ENCODE measurements at regions of chr3 and their contacts with region 1.

Region 1: DNA sequence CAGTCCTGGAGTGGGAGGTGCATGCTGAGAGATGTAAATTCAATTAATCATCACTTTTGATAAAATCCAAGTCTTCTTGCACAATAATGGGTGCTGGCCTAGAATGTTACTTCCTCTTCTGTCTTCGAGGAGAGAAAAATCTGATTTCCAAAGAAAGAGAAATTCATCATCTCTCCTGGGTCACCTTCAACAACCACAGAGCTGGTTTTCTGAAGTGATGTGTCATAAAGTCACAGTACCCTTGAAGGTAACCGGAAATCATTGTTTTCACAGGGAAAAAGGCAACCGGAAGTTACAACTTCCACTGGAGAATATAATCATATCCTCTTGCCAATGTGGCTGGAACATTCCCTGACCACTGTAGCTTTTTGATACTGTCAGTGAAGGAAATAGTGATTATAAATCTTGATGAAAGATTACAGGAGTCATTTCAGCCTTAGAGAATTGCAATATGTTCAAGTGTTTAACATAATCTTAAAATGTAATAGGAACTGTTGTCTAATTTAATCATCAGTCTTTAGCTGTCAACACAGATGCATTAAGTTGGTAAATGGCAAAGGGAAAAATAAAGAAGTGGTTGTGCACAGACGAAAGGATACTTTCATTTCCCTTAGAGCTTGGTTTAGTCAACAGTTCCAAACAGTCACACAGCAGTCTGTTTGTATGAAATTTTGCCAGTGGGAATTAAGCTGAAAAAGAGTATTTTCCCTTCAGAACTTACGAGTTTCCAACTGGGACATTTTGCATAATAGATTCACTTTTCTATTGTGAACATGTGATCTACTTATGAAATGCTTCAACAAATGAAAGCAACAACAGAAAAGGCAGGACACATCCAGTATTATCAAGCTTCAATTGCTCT is 106.5 kb upstream of the SLC4A7 start:
- DNase-seq: peak; percentile 9
- H3K4me3 Mint-ChIP-seq: no peak overlapping the region
- H3K27ac Mint-ChIP-seq: peak overlapping the region; percentile 5
- H3K4me1 Mint-ChIP-seq: peaks cover 24% of the 10 kb centered on the region
- H3K27me3 Mint-ChIP-seq: no peaks in the 10 kb centered on the region

Region 2: DNA sequence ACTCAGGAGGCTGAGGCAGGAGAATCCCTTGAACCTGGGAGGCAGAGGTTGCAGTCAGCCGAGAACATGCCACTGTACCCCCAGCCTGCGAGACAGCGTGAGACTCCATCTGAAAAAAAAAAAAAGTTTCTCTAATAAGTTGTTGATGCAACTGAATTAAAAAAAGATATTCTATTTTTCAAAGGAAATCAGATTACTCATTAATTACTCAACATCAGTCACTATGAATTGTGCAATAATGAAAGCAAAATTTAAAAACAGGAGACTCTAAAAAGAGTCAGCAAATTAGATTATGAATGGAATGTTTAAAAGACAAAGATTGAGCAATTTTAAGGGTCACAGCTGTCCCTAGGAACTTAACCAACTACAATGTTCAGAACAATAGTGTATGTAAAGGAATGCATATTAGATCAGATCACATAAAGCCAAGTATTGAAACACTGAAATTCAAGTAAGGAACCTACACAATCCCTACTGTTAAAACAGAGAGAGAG is 46.2 kb before region 1 on chr3:
- CTCF ChIA-PET with region 1: no interaction called
- intact Hi-C with region 1: no loop called
- DNase-seq: no peak
- H3K4me3 Mint-ChIP-seq: no peak overlapping the region
- H3K27ac Mint-ChIP-seq: no peak overlapping the region
- H3K4me1 Mint-ChIP-seq: peaks cover 3% of the 10 kb centered on the region
- H3K27me3 Mint-ChIP-seq: no peaks in the 10 kb centered on the region

Region 3: DNA sequence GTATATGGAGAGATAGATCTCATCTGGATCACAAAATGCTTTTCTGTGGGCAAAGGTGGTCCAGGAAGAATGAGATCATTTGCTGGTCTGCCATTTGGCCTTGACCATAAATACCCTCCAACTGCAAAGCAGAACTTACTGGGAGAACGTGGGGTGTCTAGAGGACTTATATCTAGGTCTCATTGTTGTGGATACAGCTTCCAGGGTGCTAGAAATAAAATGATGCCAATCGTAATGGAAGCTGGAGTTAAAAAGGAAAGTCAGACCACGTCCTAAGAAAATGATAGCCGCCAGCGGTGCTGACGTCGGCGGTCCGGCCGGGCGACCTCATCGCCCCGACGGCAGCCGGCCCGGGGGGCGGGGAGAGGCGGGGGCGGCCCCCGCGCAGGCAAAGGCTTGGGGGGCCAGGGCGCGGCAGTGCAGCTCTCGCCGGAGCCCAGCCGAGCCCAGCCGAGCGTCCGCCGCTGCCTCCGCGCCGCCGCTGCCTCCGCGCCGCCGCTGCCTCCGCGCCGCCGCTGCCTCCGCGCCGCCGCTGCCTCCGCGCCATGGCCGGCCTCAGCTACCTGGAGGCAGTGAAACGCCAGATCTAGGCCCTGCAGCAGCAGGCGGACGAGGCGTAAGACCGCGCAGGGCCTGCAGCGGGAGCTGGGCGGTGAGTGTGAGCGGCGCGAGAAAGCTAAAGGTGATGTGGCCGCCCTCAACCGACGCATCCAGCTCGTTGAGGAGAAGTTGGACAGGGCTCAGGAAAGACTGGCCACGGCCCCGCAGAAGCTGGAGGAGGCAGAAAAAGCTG is 42.0 kb after region 1 on chr3:
- CTCF ChIA-PET with region 1: interaction called, 4 read pairs
- intact Hi-C with region 1: loop called (anchors 2 kb)
- DNase-seq: peak; percentile 42
- H3K4me3 Mint-ChIP-seq: peak overlapping the region; percentile 80
- H3K27ac Mint-ChIP-seq: peak overlapping the region; percentile 22
- H3K4me1 Mint-ChIP-seq: peaks cover 17% of the 10 kb centered on the region
- H3K27me3 Mint-ChIP-seq: no peaks in the 10 kb centered on the region

Region 4: GRCh38 chr3:27639271-27639670 is 48.6 kb after region 1 on chr3:
- CTCF ChIA-PET with region 1: no interaction called
- intact Hi-C with region 1: loop called (anchors 2 kb)
- DNase-seq: peak; percentile 36
- H3K4me3 Mint-ChIP-seq: no peak overlapping the region
- H3K27ac Mint-ChIP-seq: peak overlapping the region; percentile 26
- H3K4me1 Mint-ChIP-seq: peaks cover 9% of the 10 kb centered on the region
- H3K27me3 Mint-ChIP-seq: no peaks in the 10 kb centered on the region

Region 5: GRCh38 chr3:27659279-27660021 is 68.8 kb after region 1 on chr3:
- CTCF ChIA-PET with region 1: interaction called, 4 read pairs
- intact Hi-C with region 1: loop called (anchors 5 kb)
- DNase-seq: peak; percentile 43
- H3K4me3 Mint-ChIP-seq: no peak overlapping the region
- H3K27ac Mint-ChIP-seq: no peak overlapping the region
- H3K4me1 Mint-ChIP-seq: peaks cover 2% of the 10 kb centered on the region
- H3K27me3 Mint-ChIP-seq: no peaks in the 10 kb centered on the region